Prostate gland (tissue), 2 donors: ENCODE measurements at regions of chr17 and their contacts with region 1.

Region 1: DNA sequence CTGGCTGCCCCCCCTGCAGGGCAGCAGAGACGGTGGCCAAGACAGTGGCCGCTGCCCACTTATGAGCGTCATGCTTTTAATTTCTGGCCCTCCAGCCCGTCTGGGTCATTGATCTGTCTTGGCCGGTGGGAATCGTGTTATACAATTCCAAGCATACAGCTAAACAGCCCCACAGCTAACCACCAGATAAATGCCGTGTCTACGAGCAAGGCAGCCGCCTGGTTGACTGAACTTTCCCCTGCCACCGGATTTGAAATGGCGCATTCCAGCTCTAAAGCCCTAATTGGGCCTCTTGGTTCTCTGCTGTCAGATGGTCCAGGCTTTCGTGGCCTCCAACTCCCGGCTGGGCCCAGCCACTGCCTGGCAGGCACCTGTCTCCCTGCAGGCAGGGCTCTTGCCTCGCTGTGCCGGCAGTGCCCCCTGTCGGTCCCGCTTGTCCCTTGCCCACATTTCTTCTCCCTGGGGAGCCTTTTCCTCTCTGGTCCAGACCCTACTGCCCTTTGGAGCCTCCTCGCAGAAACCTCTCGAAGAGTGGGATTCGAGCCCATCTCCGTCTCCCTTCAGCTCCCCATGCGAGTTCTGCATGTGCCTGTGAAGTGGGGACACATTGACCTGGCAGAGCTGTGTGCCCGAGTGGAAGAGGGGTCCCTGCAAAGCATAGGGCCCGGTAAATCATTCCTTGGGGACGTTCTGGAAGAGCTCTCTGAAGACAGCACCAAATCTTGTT is 1.8 kb upstream of the RBFOX3 start:
- DNase-seq: no peak
- H3K4me3 ChIP-seq: no peak overlapping the region
- H3K27ac ChIP-seq: peak overlapping the region; percentile 13 to 15
- H3K4me1 ChIP-seq: no peaks in the 10 kb centered on the region
- H3K27me3 ChIP-seq: peaks cover 49% of the 10 kb centered on the region
- CTCF ChIP-seq: peak; percentile 19 to 50 (median 32)
- POLR2A ChIP-seq: no peak

Region 2: GRCh38 chr17:79658811-79659207 is 46.2 kb after region 1 on chr17:
- intact Hi-C with region 1: loop called (anchors 2 kb)
- DNase-seq: peak; percentile 4
- H3K4me3 ChIP-seq: no peak overlapping the region
- H3K27ac ChIP-seq: peak overlapping the region in 1 of 2 donors; percentile 15
- H3K4me1 ChIP-seq: no peaks in the 10 kb centered on the region
- H3K27me3 ChIP-seq: peaks cover 3% of the 10 kb centered on the region
- CTCF ChIP-seq: peak in 2 of 4 experiments; percentile 25 to 39
- POLR2A ChIP-seq: no peak

Region 3: GRCh38 chr17:79691931-79692330 is 79.3 kb after region 1 on chr17:
- intact Hi-C with region 1: loop called (anchors 5 kb)
- DNase-seq: peak; percentile 40
- H3K4me3 ChIP-seq: no peak overlapping the region
- H3K27ac ChIP-seq: peak overlapping the region in 1 of 2 donors; percentile 26
- H3K4me1 ChIP-seq: peaks cover 4% of the 10 kb centered on the region
- H3K27me3 ChIP-seq: no peaks in the 10 kb centered on the region
- CTCF ChIP-seq: no peak
- POLR2A ChIP-seq: no peak